Thyroid gland (tissue), 4 donors: ENCODE measurements at regions of chr5 and their contacts with region 1.

Region 1: DNA sequence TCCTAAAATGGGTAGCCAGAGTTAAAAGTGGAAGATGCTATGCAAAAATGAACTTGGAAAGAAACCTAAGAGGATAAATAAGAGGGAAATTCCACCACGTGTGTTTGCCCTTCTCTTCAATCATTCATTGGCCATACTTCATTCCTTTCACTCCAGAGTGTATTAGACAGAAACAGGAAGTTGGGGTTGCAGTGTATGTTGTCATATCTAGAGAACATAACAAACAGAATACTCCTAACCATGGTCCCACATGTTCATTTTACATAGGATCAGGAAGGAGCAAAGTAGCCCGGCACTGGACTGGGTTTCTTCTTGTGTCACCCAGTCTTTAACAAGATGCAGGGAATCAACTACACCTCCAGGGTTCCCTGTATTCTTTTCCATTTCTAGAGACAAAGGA is 7.6 kb upstream of the GPBP1 start:
- DNase-seq: no peak
- H3K4me3 ChIP-seq: no peak overlapping the region
- H3K27ac ChIP-seq: no peak overlapping the region
- H3K4me1 ChIP-seq: no peaks in the 10 kb centered on the region
- H3K27me3 ChIP-seq: no peaks in the 10 kb centered on the region
- CTCF ChIP-seq: no peak
- POLR2A ChIP-seq: no peak

Region 2: DNA sequence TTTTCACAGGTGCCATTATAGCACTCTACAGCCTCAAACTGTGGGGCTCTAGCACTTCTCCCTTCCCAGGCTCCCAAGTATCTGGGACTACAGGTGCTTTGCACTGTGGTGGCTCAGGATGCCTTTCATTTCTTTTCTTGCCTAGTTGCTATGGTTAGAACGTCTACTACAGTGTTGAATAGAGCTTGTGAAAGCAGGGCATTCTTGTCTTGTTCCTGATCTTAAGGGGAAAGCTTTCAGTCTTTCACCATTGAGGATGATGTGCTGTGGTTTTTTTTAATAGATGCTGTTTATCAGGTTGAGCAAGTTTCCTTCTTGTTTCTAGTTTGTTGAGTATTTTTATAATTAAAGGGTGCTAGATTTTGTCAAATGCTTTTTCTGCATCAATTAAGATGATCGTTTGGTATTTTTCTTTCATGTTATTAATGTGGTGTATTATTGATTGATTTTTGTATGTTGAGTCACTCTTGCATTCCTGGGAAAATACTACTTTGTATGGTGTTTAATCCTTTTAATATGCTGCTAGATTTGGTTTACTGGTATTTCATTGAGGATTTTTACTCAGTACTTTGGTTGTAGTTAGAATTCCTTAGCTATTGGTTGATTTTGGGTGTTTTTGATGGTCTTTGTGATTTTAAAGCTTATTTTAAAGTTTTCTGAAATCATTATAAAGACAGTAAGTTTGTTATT is 43.2 kb after region 1 on chr5:
- intact Hi-C with region 1: loop called (anchors 5 kb)
- DNase-seq: no peak
- H3K4me3 ChIP-seq: no peak overlapping the region
- H3K27ac ChIP-seq: no peak overlapping the region
- H3K4me1 ChIP-seq: peaks cover 5 to 7% of the 10 kb centered on the region in 2 donors
- H3K27me3 ChIP-seq: no peaks in the 10 kb centered on the region
- CTCF ChIP-seq: no peak
- POLR2A ChIP-seq: no peak